Natural killer cell (primary cell): ENCODE measurements at regions of chr9 and their contacts with region 1.

Region 1: DNA sequence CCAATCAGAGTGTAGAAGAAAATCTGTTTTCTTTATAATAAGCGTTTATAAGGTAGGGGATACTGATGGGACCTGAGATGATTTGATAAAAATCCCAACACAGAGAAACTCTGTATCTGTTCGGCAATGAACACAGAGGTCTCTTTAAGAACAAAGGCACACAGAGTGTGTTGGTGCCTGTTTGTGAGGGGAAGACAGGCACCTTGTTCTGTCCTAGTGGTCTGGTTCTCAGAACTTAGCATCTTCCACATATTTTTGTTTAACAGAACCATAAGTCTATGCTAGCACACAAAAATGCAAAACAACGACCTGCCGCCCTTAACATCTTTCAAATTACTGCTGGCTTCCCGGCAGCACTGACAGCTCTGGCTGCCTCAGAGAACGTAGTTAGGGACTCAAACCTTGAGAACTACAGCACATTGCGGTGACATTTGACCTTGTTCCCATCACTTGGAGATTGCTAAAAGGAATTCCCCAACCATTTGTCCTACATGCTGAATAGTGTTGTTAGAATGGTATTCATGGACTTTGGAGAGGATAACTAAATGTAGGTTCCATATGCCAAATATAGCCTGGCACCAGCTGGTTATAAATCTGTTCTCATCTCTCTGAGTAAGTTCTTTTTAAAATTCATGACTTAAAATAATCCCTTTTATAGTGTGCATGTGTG is 871.7 kb upstream of the TYRP1 start:
- DNase-seq: no peak
- ATAC-seq: no peak
- H3K4me3 ChIP-seq: no peak overlapping the region
- H3K4me3 Mint-ChIP-seq: no peak overlapping the region
- H3K27ac ChIP-seq: no peak overlapping the region
- H3K27ac Mint-ChIP-seq: no peak overlapping the region
- H3K4me1 ChIP-seq: no peaks in the 10 kb centered on the region
- H3K4me1 Mint-ChIP-seq: no peaks in the 10 kb centered on the region
- H3K27me3 ChIP-seq: no peaks in the 10 kb centered on the region
- H3K27me3 Mint-ChIP-seq: no peaks in the 10 kb centered on the region
- CTCF ChIP-seq: no peak

Region 2: GRCh38 chr9:11749396-11749795 is 72.0 kb before region 1 on chr9:
- intact Hi-C with region 1: no loop called
- DNase-seq: no peak
- ATAC-seq: no peak
- H3K4me3 ChIP-seq: no peak overlapping the region
- H3K4me3 Mint-ChIP-seq: no peak overlapping the region
- H3K27ac ChIP-seq: no peak overlapping the region
- H3K27ac Mint-ChIP-seq: no peak overlapping the region
- H3K4me1 ChIP-seq: no peaks in the 10 kb centered on the region
- H3K4me1 Mint-ChIP-seq: no peaks in the 10 kb centered on the region
- H3K27me3 ChIP-seq: no peaks in the 10 kb centered on the region
- H3K27me3 Mint-ChIP-seq: no peaks in the 10 kb centered on the region
- CTCF ChIP-seq: no peak

Region 3: GRCh38 chr9:11902610-11903009 is 81.2 kb after region 1 on chr9:
- intact Hi-C with region 1: loop called (anchors 10 kb)
- DNase-seq: no peak
- ATAC-seq: no peak
- H3K4me3 ChIP-seq: no peak overlapping the region
- H3K4me3 Mint-ChIP-seq: no peak overlapping the region
- H3K27ac ChIP-seq: no peak overlapping the region
- H3K27ac Mint-ChIP-seq: no peak overlapping the region
- H3K4me1 ChIP-seq: no peaks in the 10 kb centered on the region
- H3K4me1 Mint-ChIP-seq: no peaks in the 10 kb centered on the region
- H3K27me3 ChIP-seq: no peaks in the 10 kb centered on the region
- H3K27me3 Mint-ChIP-seq: no peaks in the 10 kb centered on the region
- CTCF ChIP-seq: no peak